Endothelial cell of umbilical vein (primary cell): ENCODE measurements at regions of chr1 and their contacts with region 1.

Region 1: DNA sequence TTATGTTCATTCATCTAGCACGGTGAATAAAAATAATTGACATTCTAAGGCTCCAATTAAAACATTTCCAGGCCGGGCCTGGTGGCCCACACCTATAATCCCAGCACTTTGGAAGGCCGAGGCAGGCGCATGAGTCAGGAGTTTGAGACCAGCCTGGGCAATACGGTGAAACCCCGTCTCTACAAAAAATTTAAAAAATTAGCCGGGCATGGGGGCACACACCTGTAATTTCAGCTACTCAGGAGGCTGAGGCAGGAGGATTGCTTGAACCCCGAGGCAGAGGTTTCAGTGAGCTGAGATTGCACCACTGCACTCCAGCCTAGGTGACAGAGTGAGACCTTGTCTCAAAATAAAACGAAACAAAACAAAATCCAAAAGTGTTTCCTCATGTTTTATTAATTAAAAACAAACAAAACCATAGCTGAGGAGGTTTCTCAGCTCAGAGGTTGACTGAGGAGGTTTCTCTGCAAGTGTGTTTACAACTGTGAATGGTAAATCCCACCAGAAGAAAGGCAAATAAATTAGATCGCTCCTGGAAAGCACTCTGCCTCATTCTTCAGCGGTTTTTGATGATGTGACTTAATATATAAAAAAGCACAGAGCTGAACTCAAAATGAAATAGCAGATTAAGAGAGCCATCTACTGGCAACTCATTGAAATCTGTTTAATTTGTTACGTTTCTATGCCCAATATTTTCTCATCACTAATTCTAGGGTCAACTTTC is 37.7 kb upstream of the ATG4C start:
- DNase-seq: peak; percentile 58
- H3K4me3 ChIP-seq: no peak overlapping the region
- H3K27ac ChIP-seq: no peak overlapping the region
- H3K4me1 ChIP-seq: no peaks in the 10 kb centered on the region
- H3K27me3 ChIP-seq: no peaks in the 10 kb centered on the region
- CTCF ChIP-seq: peak; percentile 30 to 31
- POLR2A ChIP-seq: no peak

Region 2: GRCh38 chr1:62391369-62391971 is 354.8 kb before region 1 on chr1:
- CTCF ChIA-PET with region 1: interaction called, 3 read pairs
- POLR2A ChIA-PET with region 1: no interaction called
- dilution Hi-C with region 1: no loop called
- intact Hi-C with region 1: loop called (anchors 1 kb)
- DNase-seq: peak; percentile 5
- H3K4me3 ChIP-seq: no peak overlapping the region
- H3K27ac ChIP-seq: no peak overlapping the region
- H3K4me1 ChIP-seq: no peaks in the 10 kb centered on the region
- H3K27me3 ChIP-seq: no peaks in the 10 kb centered on the region
- CTCF ChIP-seq: peak; percentile 46 to 59
- POLR2A ChIP-seq: no peak

Region 3: DNA sequence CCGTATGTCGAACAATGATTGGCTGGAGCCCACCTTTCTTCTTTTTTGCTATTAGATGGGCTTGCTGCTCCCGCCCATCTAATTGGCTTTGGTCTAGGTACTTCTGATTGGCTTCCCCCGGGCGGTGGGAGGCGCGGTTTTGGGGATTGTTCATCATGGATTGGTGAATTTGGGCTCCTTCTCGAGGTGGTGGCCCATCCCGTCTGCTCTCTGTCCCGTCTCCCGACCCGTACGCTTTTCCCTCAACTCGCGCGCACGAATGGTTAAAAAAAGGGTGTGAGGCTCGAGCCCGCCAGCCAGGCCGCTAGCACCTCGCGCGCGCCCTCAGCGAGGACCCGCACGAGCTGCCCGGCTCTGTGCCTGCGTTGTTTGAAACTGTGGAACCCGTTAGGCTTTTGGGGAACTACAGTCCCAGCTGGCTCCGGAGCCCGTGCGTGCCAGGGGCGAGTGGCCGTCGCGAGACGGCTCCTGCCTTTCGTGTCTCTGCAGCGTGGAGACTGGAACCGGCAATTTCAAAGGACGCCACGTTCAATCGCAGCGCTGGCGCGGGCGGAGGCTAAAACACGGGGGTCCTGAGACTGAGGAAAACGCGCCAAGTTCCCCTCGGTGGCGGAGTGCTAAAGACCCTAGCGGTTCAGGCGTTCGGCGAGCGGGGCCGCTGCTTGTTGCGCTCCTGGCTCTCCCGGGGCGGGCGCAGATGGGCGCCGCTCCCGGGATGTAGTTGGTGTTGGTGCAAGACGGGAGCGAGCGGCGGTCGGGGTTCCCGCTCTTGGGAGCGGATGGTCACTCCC is 309.6 kb before region 1 on chr1 and contains the start of gene USP1:
- CTCF ChIA-PET with region 1: interaction called, 9 read pairs
- POLR2A ChIA-PET with region 1: no interaction called
- dilution Hi-C with region 1: no loop called
- intact Hi-C with region 1: loop called (anchors 5 kb)
- DNase-seq: peak; percentile 100
- H3K4me3 ChIP-seq: peak within 1 kb of the TSS; percentile 73 to 95 (median 78)
- H3K27ac ChIP-seq: peak within 1 kb of the TSS; percentile 89
- H3K4me1 ChIP-seq: peaks cover 13% of the 10 kb centered on the region
- H3K27me3 ChIP-seq: no peaks in the 10 kb centered on the region
- CTCF ChIP-seq: peak in 1 of 2 donors; percentile 7
- POLR2A ChIP-seq: peak; percentile 43
- total RNA-seq, gene USP1: 37.8 and 38.4 TPM in 2 replicates

Region 4: DNA sequence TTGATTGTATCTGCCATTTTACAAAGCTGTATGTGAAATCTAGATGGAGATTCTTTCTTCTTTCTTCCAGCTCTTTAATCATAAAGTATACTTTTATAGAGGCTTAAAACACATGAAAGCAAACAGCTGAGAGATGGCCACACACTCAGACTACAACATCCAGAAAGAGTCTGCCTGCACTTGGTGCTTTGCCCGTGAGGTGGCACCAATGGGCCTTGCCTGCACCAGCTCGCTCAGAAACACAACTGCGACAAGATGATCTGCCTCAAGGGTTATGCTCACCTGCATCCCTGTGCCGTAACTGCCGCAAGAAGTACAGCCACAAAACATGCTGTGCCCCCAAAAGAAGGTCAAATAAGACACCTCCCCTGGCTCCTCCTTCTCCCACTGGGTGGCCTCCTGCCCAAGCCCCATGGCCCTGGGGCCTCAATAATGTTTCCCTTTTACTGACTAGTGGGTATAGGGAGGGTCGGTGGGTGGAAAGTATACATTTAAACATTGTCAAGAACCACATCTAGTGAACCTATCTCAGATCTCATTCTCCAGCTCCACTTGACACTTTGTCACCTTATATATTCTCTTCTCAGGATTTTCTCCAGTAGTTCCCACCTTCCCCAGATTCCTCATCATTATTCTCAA is 215.6 kb before region 1 on chr1:
- CTCF ChIA-PET with region 1: interaction called, 84 read pairs
- POLR2A ChIA-PET with region 1: no interaction called
- dilution Hi-C with region 1: no loop called
- intact Hi-C with region 1: loop called (anchors 1 kb)
- DNase-seq: peak; percentile 29
- H3K4me3 ChIP-seq: no peak overlapping the region
- H3K27ac ChIP-seq: no peak overlapping the region
- H3K4me1 ChIP-seq: peaks cover 3% of the 10 kb centered on the region
- H3K27me3 ChIP-seq: no peaks in the 10 kb centered on the region
- CTCF ChIP-seq: peak; percentile 36 to 57
- POLR2A ChIP-seq: no peak

Region 5: DNA sequence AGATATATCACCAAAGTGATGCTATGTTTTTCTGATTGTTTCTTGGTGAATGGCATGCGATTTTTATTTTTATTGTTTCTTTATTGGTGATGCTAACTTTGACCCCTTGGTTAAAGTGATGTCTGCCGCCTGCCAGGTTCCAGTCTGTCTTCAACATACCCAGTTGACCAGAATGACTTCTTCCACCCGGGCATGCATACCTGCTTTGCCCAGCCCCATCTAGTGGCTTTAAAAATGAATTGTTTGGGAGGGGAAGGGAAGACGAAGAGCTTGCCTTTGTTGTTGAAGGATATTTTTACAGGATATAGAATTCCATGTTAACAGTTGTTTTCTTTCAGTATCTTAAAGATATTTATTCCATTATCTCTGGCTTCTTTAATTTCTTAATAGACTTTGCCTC is 102.8 kb after region 1 on chr1:
- CTCF ChIA-PET with region 1: no interaction called
- POLR2A ChIA-PET with region 1: no interaction called
- dilution Hi-C with region 1: no loop called
- intact Hi-C with region 1: no loop called
- DNase-seq: no peak
- H3K4me3 ChIP-seq: no peak overlapping the region
- H3K27ac ChIP-seq: no peak overlapping the region
- H3K4me1 ChIP-seq: peaks cover 2% of the 10 kb centered on the region
- H3K27me3 ChIP-seq: no peaks in the 10 kb centered on the region
- CTCF ChIP-seq: no peak
- POLR2A ChIP-seq: no peak